Naive thymus-derived CD4-positive, alpha-beta T cell (primary cell): ENCODE measurements at regions of chrX and their contacts with region 1.

Region 1: DNA sequence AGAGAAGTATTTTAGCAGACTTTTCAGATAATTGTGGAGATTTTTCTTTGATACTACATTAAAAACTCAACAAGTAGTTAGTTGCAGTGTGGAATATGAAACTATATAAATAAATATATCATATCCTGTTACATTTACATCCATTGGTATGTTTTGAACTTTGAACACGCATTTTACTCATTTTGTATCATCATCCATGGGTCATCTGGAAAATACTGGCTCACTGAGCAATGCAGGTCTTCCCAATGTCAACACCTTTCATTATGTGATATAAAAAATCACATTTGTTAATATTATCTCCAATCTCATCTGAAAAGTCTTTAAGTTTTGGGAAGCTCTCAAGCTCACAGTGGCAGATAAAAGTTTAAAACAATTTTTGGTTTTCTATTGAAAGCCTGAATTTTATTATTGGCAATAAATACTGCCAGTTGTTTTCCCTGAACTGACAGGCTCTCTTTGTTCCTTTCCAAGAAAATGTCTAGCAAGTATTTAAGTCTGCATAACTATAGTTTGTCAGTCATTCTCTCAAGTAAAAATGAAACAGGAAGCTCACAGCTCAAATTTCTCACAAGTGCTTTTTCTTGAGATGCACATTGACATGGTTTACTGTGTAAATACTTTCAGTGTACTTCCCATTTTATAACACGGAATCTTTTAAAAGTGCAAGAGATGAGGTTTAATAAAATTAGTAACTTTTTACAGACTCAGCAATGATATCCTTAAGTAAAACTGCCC is 183.5 kb upstream of the GPC4 start:
- DNase-seq: no peak
- ATAC-seq: no peak
- H3K4me3 ChIP-seq: no peak overlapping the region
- H3K4me3 Mint-ChIP-seq: no peak overlapping the region
- H3K27ac ChIP-seq: no peak overlapping the region
- H3K27ac Mint-ChIP-seq: no peak overlapping the region
- H3K4me1 ChIP-seq: no peaks in the 10 kb centered on the region
- H3K4me1 Mint-ChIP-seq: peaks cover 0 to 9% (median 0%) of the 10 kb centered on the region in 7 donors
- H3K27me3 ChIP-seq: no peaks in the 10 kb centered on the region
- H3K27me3 Mint-ChIP-seq: peaks cover 0 to 6% (median 0%) of the 10 kb centered on the region in 5 donors

Region 2: GRCh38 chrX:133555782-133556458 is 42.8 kb before region 1 on chrX:
- CTCF ChIA-PET with region 1: no interaction called
- POLR2A ChIA-PET with region 1: no interaction called
- intact Hi-C with region 1: no loop called
- DNase-seq: no peak
- ATAC-seq: peak; percentile 26
- H3K4me3 ChIP-seq: no peak overlapping the region
- H3K4me3 Mint-ChIP-seq: no peak overlapping the region
- H3K27ac ChIP-seq: no peak overlapping the region
- H3K27ac Mint-ChIP-seq: no peak overlapping the region
- H3K4me1 ChIP-seq: no peaks in the 10 kb centered on the region
- H3K4me1 Mint-ChIP-seq: no peaks in the 10 kb centered on the region
- H3K27me3 ChIP-seq: no peaks in the 10 kb centered on the region
- H3K27me3 Mint-ChIP-seq: peaks cover 0 to 4% (median 0%) of the 10 kb centered on the region in 5 donors

Region 3: GRCh38 chrX:133570549-133570948 is 28.2 kb before region 1 on chrX:
- CTCF ChIA-PET with region 1: interaction called, 10 read pairs
- POLR2A ChIA-PET with region 1: interaction called, 3 read pairs
- intact Hi-C with region 1: no loop called
- DNase-seq: no peak
- ATAC-seq: no peak
- H3K4me3 ChIP-seq: no peak overlapping the region
- H3K4me3 Mint-ChIP-seq: no peak overlapping the region
- H3K27ac ChIP-seq: no peak overlapping the region
- H3K27ac Mint-ChIP-seq: no peak overlapping the region
- H3K4me1 ChIP-seq: no peaks in the 10 kb centered on the region
- H3K4me1 Mint-ChIP-seq: peaks cover 0 to 2% (median 0%) of the 10 kb centered on the region in 7 donors
- H3K27me3 ChIP-seq: no peaks in the 10 kb centered on the region
- H3K27me3 Mint-ChIP-seq: no peaks in the 10 kb centered on the region

Region 4: GRCh38 chrX:134101636-134102035 is 502.9 kb after region 1 on chrX:
- CTCF ChIA-PET with region 1: no interaction called
- POLR2A ChIA-PET with region 1: no interaction called
- intact Hi-C with region 1: no loop called
- DNase-seq: peak in 2 of 9 donors; percentile 3 to 10
- ATAC-seq: no peak
- H3K4me3 ChIP-seq: no peak overlapping the region
- H3K4me3 Mint-ChIP-seq: no peak overlapping the region
- H3K27ac ChIP-seq: no peak overlapping the region
- H3K27ac Mint-ChIP-seq: peak overlapping the region in 2 of 9 donors; percentile 38 to 65
- H3K4me1 ChIP-seq: no peaks in the 10 kb centered on the region
- H3K4me1 Mint-ChIP-seq: peaks cover 0 to 12% (median 7%) of the 10 kb centered on the region in 7 donors
- H3K27me3 ChIP-seq: no peaks in the 10 kb centered on the region
- H3K27me3 Mint-ChIP-seq: no peaks in the 10 kb centered on the region